ENCODE measurements at regions of chr1 and their contacts with region 1.

Region 1: DNA sequence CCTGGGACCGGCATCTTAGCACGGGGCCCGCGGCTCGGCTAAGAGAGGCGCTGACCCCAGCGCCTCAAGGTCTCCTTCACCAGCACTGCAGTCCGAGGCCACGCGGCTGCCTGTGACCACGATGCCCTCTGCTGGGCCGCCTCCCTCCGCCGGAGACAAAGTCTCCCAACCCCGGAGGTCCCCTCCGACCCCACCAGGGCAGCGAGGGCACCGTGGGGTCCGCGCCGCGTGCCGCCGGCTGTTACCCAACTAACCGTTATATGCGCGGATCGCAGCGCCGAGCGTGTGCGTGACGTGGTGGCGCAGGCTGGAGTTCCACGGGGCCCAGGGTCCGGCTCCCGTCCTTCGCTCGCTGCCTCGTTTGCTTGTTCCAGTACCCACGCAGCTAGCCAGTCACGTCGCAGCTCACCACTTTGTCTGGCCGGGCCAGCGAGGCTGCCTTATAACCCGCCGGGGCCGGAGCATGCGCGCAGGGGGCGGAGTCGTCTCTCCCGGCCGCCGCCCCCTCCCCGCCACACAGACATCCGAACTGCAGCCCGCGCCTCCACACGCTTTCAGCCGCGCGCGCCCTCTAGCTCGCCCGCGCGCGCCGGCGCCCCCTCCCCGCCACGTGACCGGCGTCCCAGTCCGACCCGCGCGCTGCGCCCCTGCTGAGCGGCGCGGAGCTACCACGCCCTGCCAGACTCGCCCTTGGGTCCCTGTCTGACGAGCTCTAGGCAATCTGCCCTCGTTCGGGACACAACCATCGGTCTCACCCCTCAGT is at the start of gene SLC16A1:
- DNase-seq: peak; percentile 92 to 95
- ATAC-seq: peak; percentile 93 to 97 (median 94)
- H3K4me3 ChIP-seq: peak within 1 kb of the TSS; percentile 34 to 94 (median 77)
- H3K27ac ChIP-seq: peak within 1 kb of the TSS; percentile 85 to 96 (median 94)
- H3K4me1 ChIP-seq: peaks cover 0 to 62% (median 51%) of the 10 kb centered on the region in 9 donors
- H3K27me3 ChIP-seq: no peaks in the 10 kb centered on the region
- CTCF ChIP-seq: peak in 8 of 9 donors; percentile 8 to 59 (median 49)
- total RNA-seq, gene SLC16A1: 129 to 193 (median 152) TPM

Region 2: DNA sequence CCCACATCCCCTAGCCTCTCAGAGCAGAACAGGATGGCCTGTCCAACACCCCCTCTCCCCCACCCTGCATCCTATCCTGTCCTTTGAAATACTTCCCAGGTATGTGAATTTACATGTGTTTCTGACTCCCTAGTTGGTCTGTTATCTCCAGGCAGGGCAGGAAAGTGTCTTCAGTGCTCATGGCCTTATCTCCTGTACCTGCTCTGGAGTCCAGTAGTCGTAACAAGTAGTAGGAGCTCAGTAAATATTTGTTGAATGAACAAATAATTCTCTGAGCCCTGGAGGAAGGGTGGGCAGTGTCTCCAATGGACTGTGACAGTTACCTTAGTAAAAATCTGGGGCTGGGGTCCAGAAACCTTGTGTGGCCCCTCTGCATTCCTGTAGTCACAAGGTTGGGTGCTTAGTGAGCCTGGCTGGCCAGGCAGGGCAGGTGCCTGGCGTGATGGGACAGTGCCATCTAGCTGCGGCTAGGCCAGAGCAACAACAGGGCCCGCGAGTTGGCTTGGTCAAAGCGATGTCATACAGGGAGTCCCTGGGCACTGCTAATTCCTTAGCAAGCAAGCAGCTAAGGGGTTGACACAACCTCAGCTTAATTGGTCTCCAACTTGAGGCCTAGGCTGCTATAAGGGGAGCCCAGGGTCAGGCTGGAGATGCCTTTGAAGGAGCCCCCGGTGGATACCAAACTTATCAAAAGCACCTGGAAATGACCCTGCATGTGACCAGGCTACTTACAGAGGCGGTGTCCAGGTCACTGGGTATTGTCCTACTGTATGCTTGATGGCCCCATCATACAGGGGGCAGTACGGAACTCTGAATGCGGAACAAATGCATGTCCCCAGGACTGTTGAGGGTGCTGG is 151.8 kb before region 1 on chr1:
- intact Hi-C with region 1: loop called in 1 of 10 experiments (anchors 10 kb)
- DNase-seq: peak; percentile 50 to 65
- ATAC-seq: peak; percentile 82 to 90 (median 86)
- H3K4me3 ChIP-seq: no peak overlapping the region
- H3K27ac ChIP-seq: no peak overlapping the region
- H3K4me1 ChIP-seq: peaks cover 0 to 5% (median 0%) of the 10 kb centered on the region in 9 donors
- H3K27me3 ChIP-seq: no peaks in the 10 kb centered on the region
- CTCF ChIP-seq: peak; percentile 34 to 82 (median 75)

Region 3: GRCh38 chr1:112904071-112904830 is 51.7 kb before region 1 on chr1:
- intact Hi-C with region 1: loop called in 2 of 10 experiments (anchors 10 kb)
- DNase-seq: no peak
- ATAC-seq: peak in 1 of 8 donors; percentile 28
- H3K4me3 ChIP-seq: no peak overlapping the region
- H3K27ac ChIP-seq: peak overlapping the region in 7 of 10 donors; percentile 38 to 82 (median 72)
- H3K4me1 ChIP-seq: peaks cover 0 to 41% (median 32%) of the 10 kb centered on the region in 9 donors
- H3K27me3 ChIP-seq: no peaks in the 10 kb centered on the region
- CTCF ChIP-seq: no peak

Region 4: DNA sequence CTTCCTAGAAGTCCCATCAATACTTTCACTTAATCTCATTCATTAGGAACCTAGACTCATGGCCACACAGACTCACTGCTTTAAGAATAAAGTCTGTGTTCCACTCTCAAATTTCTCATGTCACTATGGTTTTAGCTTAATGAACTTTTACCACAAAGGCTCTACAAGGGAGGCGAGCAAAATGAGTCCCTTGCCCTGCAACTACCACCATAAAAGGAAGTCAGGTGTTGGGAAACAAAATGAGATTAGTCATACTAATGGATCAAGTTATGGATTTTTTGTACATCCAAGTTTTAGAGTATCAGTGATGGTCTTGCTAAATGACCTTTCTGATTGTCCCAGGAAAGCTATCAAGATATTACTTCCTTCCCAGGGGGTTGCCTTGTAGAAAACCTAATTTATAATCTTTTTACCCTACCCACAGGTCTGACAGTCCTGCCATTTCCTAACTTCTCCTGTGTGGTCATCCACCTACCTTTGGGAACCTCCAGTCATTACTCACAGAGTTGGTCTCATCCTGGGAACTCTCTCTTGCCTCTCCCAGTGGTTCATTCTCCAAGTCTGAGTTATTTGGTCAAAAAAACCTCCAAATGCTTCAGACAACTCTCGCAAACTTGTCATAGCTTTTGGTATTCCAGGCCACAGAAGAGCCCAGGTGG is 51.9 kb after region 1 on chr1:
- intact Hi-C with region 1: loop called in 1 of 10 experiments (anchors 10 kb)
- DNase-seq: no peak
- ATAC-seq: no peak
- H3K4me3 ChIP-seq: no peak overlapping the region
- H3K27ac ChIP-seq: no peak overlapping the region
- H3K4me1 ChIP-seq: peaks cover 0 to 7% (median 0%) of the 10 kb centered on the region in 9 donors
- H3K27me3 ChIP-seq: no peaks in the 10 kb centered on the region
- CTCF ChIP-seq: no peak

Region 5: GRCh38 chr1:113031171-113031933 is 75.4 kb after region 1 on chr1:
- intact Hi-C with region 1: loop called in 6 of 10 experiments (anchors 1 to 10 kb)
- DNase-seq: no peak
- ATAC-seq: peak in 1 of 8 donors; percentile 26
- H3K4me3 ChIP-seq: no peak overlapping the region
- H3K27ac ChIP-seq: peak overlapping the region in 3 of 10 donors; percentile 15 to 83 (median 79)
- H3K4me1 ChIP-seq: peaks cover 0 to 32% (median 13%) of the 10 kb centered on the region in 9 donors
- H3K27me3 ChIP-seq: no peaks in the 10 kb centered on the region
- CTCF ChIP-seq: no peak

Measured in heart right ventricle (tissue), 16 donors.